Uterus (tissue), 4 donors: ENCODE measurements at regions of chr15 and their contacts with region 1.

Region 1: DNA sequence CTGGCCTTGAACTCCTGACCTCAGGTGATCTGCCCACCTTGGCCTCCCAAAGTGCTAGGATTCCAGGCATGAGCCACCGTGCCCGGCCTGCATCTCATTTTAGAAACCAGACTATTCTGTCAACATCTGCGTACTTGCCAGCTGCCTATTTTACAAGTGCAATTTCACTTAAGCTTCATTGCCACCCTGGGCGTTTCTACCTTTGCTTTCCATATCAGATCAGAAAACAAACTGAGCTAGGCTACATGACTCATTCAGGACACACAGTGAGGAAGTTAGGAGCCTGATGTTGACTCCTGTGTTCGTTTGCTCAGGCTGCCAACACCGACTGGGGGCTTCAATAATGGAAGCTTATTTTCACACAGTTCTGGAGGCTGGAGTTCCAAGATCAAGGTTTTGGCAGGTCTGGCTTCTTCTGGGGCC is 42.3 kb upstream of the KLHL25 start:
- DNase-seq: no peak
- H3K4me3 ChIP-seq: no peak overlapping the region
- H3K27ac ChIP-seq: no peak overlapping the region
- H3K4me1 ChIP-seq: no peaks in the 10 kb centered on the region
- H3K27me3 ChIP-seq: no peaks in the 10 kb centered on the region
- CTCF ChIP-seq: no peak
- POLR2A ChIP-seq: no peak

Region 2: DNA sequence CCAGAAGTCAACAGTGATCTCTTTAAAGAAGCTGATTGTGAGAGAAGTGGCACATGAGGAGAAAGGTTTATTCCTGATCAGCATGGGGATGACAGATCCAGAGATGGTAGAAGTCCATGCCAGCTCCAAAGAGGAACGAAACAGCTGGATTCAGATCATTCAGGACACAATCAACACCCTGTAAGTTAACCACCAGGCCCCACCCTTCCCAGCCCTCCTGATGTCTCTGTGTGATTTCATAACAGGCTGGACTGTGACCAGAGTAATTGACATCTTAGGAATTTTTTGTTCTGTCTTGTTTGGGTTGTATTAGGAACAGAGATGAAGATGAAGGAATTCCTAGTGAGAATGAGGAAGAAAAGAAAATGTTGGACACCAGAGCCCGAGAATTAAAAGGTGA is 110.0 kb before region 1 on chr15:
- intact Hi-C with region 1: loop called (anchors 5 kb)
- DNase-seq: no peak
- H3K4me3 ChIP-seq: no peak overlapping the region
- H3K27ac ChIP-seq: peak overlapping the region; percentile 88 to 98
- H3K4me1 ChIP-seq: peaks cover 7 to 17% of the 10 kb centered on the region in 2 donors
- H3K27me3 ChIP-seq: no peaks in the 10 kb centered on the region
- CTCF ChIP-seq: no peak
- POLR2A ChIP-seq: no peak